ENCODE measurements at regions of chr20 and their contacts with region 1.

Region 1: GRCh38 chr20:3407771-3408637 is 535 bp upstream of the DNAAF9 start:
- DNase-seq: peak; percentile 78
- H3K4me3 ChIP-seq: peak overlapping the region; percentile 78 to 89 (median 84)
- H3K27ac ChIP-seq: peak overlapping the region; percentile 20
- H3K4me1 ChIP-seq: peaks cover 27% of the 10 kb centered on the region
- H3K27me3 ChIP-seq: peaks cover 0 to 7% of the 10 kb centered on the region in 2 experiments
- CTCF ChIP-seq: no peak
- POLR2A ChIP-seq: peak; percentile 73

Region 2: DNA sequence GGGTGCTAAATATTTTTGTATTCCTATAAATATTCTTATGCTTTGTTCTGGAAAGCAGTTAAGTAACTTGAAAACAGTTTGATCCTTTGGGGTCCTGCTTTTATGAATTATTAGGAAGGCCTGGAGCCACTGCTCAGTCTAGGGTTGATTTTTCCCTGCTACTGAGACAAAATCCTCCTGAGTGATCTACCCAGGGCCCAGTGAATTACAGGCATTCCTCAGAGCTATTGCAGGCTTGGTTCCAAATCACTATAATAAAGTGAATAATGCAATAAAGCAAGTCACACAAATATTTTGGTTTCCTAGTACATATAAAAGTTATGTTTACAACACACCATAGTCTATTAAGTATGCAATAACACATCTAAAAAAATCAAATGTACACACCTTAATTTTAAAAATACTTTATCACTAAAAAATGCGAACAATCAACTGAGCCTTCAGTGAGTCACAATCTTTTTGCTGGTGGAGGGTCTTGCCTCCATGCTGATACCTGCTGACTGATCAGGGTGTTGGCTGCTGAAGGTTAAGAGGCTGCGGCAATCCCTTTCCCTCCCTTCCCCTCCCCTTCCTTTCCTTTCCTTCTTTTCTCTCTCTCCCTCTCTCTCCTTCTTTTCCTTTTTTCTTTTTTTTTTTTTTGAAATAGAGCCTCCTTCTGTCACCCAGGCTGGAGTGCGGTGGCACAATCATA is 43.5 kb before region 1 on chr20:
- CTCF ChIA-PET with region 1: no interaction called
- POLR2A ChIA-PET with region 1: no interaction called
- dilution Hi-C with region 1: no loop called
- intact Hi-C with region 1: loop called (anchors 5 kb)
- DNase-seq: no peak
- H3K4me3 ChIP-seq: no peak overlapping the region
- H3K27ac ChIP-seq: no peak overlapping the region
- H3K4me1 ChIP-seq: no peaks in the 10 kb centered on the region
- H3K27me3 ChIP-seq: no peaks in the 10 kb centered on the region
- CTCF ChIP-seq: no peak
- POLR2A ChIP-seq: no peak

Region 3: DNA sequence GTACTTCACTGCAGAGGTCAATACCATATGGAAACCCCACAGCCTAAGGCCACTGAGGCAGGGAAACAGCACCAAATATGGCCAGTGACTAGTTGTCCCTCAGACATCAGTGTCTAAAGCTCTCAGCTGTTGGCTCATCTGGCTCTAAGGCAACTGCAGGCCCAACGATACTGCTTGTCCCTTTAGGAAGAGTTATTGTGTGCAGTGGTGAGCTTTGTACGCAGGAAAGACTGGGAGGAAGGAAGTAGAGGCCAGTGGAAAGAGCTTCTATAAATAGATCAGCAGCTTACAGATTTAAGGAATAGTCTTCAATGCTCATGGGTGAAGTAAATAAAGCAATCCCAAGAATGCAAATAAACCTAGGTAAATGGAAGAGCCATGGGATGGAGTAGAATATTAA is 29.9 kb before region 1 on chr20:
- CTCF ChIA-PET with region 1: interaction called, 4 read pairs
- POLR2A ChIA-PET with region 1: no interaction called
- dilution Hi-C with region 1: no loop called
- intact Hi-C with region 1: loop called (anchors 1 kb)
- DNase-seq: peak; percentile 83
- H3K4me3 ChIP-seq: peak overlapping the region in 1 of 3 experiments; percentile 10
- H3K27ac ChIP-seq: peak overlapping the region; percentile 54
- H3K4me1 ChIP-seq: peaks cover 17% of the 10 kb centered on the region
- H3K27me3 ChIP-seq: no peaks in the 10 kb centered on the region
- CTCF ChIP-seq: no peak
- POLR2A ChIP-seq: no peak

Region 4: DNA sequence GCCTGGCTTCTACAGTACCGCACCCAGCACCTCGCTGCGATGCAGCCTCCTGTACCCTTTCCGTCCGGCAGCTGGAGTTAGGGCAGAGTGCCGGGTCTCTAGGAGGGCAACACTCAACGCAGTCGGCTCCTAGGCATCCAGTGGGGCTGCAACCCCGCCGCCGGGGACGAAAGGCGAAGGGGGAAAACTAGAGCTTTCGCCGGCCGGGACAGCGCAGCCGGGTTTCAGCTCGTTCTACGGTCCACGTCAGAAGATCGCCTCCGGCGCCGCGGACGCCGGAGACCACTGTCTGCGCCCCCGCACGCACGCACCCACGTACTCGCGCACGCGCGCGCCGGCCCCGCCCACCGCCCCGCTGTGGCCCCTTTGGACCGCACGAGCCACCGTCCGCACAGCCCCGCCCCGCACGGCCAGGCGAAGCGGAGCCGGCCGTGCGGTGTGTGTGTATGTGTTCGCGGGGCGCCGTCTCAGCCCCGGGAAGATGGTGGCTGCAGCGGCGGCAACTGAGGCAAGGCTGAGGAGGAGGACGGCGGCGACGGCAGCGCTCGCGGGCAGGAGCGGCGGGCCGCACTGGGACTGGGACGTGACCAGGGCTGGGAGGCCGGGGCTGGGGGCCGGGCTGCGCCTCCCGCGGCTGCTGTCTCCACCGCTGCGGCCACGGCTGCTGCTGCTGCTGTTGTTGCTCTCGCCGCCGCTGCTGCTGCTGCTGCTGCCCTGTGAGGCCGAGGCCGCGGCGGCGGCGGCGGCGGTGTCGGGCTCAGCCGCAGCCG is 62.8 kb after region 1 on chr20 and contains the start of gene ATRN:
- CTCF ChIA-PET with region 1: interaction called, 3 read pairs
- POLR2A ChIA-PET with region 1: no interaction called
- dilution Hi-C with region 1: no loop called
- intact Hi-C with region 1: loop called (anchors 1 kb)
- DNase-seq: peak; percentile 93
- H3K4me3 ChIP-seq: peak within 1 kb of the TSS; percentile 79 to 87 (median 85)
- H3K27ac ChIP-seq: peak within 1 kb of the TSS; percentile 79
- H3K4me1 ChIP-seq: peaks cover 11% of the 10 kb centered on the region
- H3K27me3 ChIP-seq: peaks cover 10 to 16% of the 10 kb centered on the region in 2 experiments
- CTCF ChIP-seq: no peak
- POLR2A ChIP-seq: peak; percentile 98
- total RNA-seq, gene ATRN: 33.1 and 35.1 TPM in 2 replicates

Region 5: DNA sequence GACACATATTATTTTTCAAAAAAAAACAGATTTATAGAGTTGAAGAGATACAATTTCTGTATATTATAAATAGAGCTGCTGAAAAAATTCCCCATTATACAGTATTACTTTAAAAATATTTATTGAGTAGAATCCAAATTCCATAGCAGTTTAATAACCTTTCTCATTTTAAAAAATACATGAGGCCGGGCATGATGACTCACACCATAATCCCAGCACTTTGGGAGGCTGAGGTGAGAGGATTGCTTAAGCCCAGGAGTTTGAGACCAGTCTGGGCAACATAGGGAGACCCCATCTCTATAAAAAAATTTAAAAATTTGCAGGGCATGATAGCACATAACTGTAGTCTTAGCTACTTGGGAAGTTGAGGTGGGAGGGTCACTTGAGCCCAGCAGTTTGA is 75.8 kb after region 1 on chr20:
- CTCF ChIA-PET with region 1: no interaction called
- POLR2A ChIA-PET with region 1: no interaction called
- dilution Hi-C with region 1: no loop called
- intact Hi-C with region 1: no loop called
- DNase-seq: no peak
- H3K4me3 ChIP-seq: no peak overlapping the region
- H3K27ac ChIP-seq: no peak overlapping the region
- H3K4me1 ChIP-seq: no peaks in the 10 kb centered on the region
- H3K27me3 ChIP-seq: no peaks in the 10 kb centered on the region
- CTCF ChIP-seq: no peak
- POLR2A ChIP-seq: no peak

Region 6: DNA sequence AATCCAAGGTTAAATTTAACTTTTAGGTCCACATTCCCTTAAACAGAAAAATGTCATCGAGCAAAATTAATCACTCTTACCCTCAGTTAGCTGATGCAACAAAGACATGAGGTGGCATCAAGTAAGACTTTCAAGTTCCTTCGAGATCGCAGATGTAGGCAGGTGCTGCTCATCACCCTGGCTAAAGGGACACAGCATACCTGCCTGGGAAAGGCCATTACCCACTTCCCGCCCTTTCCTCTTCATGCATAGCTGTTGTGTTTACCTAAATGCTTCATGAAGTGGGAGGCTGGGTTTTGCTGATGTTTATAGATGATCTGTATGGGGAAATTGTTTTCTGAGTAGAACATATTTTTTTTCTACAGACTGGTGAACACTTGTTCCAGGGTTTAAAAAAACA is 187.5 kb after region 1 on chr20:
- CTCF ChIA-PET with region 1: no interaction called
- POLR2A ChIA-PET with region 1: no interaction called
- dilution Hi-C with region 1: no loop called
- intact Hi-C with region 1: no loop called
- DNase-seq: no peak
- H3K4me3 ChIP-seq: no peak overlapping the region
- H3K27ac ChIP-seq: no peak overlapping the region
- H3K4me1 ChIP-seq: no peaks in the 10 kb centered on the region
- H3K27me3 ChIP-seq: no peaks in the 10 kb centered on the region
- CTCF ChIP-seq: no peak
- POLR2A ChIP-seq: no peak